ENCODE measurements at regions of chr1 and their contacts with region 1.

Region 1: DNA sequence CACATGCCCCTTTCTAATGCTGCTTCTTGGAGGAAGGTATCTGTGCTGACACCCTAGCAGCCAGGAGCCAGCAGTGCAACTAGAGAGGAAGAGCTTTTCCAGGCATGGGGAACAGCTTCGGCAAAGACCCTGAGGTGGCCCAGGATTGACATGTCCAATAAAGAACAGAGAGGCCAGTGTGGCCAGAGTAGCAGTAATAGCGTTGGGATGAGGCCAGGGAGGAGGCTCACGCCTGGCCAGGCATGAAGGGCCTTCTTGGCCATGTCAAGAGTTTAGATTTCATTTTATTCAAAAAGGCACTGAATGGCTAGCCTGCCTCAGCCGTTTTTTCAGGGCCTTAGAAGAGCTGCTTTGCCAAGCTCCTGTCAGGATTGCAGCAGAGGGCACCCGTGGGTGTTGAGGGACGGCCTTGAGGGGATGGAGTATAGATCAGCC is 16.3 kb upstream of the ADAMTSL4 start:
- DNase-seq: no peak
- H3K4me3 Mint-ChIP-seq: no peak overlapping the region
- H3K27ac Mint-ChIP-seq: no peak overlapping the region
- H3K4me1 Mint-ChIP-seq: peaks cover 4% of the 10 kb centered on the region
- H3K27me3 Mint-ChIP-seq: no peaks in the 10 kb centered on the region

Region 2: GRCh38 chr1:150364231-150365003 is 168.5 kb before region 1 on chr1:
- intact Hi-C with region 1: no loop called
- DNase-seq: peak; percentile 72
- H3K4me3 Mint-ChIP-seq: peak overlapping the region; percentile 99
- H3K27ac Mint-ChIP-seq: peak overlapping the region; percentile 97
- H3K4me1 Mint-ChIP-seq: peaks cover 41% of the 10 kb centered on the region
- H3K27me3 Mint-ChIP-seq: no peaks in the 10 kb centered on the region

Region 3: GRCh38 chr1:150464422-150464826 is 68.5 kb before region 1 on chr1:
- intact Hi-C with region 1: loop called (anchors 1 kb)
- DNase-seq: peak; percentile 50
- H3K4me3 Mint-ChIP-seq: no peak overlapping the region
- H3K27ac Mint-ChIP-seq: peak overlapping the region; percentile 63
- H3K4me1 Mint-ChIP-seq: peaks cover 5% of the 10 kb centered on the region
- H3K27me3 Mint-ChIP-seq: no peaks in the 10 kb centered on the region

Measured in activated T-helper 1 cell treated with anti-CD3 and anti-CD28 coated beads, Interleukin-12 subunit alpha, Interleukin-12 subunit beta, Interleukin-2, Interleukin-4 antibody, amounts not matched to agents 30 ng/mL and 10 ng/mL and 1 ng/mL, durations not matched to agents 14 hours and 24 hours and 36 hours (primary cell).